RWPE1 (cell line): ENCODE measurements at regions of chr14 and their contacts with region 1.

Region 1: DNA sequence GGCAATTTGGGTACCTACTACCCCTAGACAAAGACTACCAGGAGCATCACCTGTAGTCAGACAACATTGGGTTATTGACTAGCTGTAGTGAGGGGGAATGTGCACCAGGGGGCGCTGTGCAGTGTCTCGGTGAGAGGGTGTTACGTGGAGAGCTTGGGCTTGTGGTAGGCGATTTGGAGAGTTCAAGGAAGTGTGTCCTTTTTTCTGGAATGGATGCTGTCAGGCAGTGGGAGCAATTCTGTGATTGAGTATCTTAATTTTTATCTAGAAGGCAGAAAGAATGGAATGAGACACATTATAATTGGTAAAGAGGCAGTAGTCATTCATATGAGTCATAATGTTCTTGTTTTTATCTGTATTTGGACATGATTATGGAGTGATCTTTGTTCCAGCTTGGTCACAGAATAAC is 187.7 kb downstream of the GALC start:
- DNase-seq: peak; percentile 50
- H3K27ac ChIP-seq: no peak overlapping the region
- CTCF ChIP-seq: peak; percentile 36

Region 2: DNA sequence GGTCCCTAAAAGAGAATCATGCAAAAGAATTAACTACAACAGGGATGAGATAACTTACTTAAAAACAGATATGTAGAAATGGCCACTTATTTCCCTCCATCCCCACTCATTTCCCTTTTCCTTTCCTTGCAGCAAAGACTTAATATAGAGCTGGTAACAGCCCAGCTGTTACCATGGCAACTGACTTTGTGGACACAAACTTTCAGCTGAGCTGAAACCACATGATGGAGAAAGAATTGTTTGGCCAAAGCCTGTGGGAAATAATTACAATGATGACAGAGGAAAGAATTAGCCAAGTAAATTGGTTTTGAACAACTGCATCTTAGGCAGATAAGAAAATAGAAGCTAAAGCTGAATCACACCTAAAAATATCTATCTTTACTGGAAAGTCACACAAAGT is 177.2 kb before region 1 on chr14:
- CTCF ChIA-PET with region 1: no interaction called
- POLR2A ChIA-PET with region 1: no interaction called
- DNase-seq: no peak
- H3K27ac ChIP-seq: no peak overlapping the region
- CTCF ChIP-seq: no peak

Region 3: GRCh38 chr14:87896393-87897380 is 91.4 kb after region 1 on chr14:
- CTCF ChIA-PET with region 1: interaction called, 11 read pairs
- POLR2A ChIA-PET with region 1: no interaction called
- DNase-seq: peak; percentile 46
- H3K27ac ChIP-seq: no peak overlapping the region
- CTCF ChIP-seq: peak; percentile 73